Activated naive CD4-positive, alpha-beta T cell treated with anti-CD3 and anti-CD28 coated beads for 36 hours (primary cell): ENCODE measurements at regions of chr11 and their contacts with region 1.

Region 1: DNA sequence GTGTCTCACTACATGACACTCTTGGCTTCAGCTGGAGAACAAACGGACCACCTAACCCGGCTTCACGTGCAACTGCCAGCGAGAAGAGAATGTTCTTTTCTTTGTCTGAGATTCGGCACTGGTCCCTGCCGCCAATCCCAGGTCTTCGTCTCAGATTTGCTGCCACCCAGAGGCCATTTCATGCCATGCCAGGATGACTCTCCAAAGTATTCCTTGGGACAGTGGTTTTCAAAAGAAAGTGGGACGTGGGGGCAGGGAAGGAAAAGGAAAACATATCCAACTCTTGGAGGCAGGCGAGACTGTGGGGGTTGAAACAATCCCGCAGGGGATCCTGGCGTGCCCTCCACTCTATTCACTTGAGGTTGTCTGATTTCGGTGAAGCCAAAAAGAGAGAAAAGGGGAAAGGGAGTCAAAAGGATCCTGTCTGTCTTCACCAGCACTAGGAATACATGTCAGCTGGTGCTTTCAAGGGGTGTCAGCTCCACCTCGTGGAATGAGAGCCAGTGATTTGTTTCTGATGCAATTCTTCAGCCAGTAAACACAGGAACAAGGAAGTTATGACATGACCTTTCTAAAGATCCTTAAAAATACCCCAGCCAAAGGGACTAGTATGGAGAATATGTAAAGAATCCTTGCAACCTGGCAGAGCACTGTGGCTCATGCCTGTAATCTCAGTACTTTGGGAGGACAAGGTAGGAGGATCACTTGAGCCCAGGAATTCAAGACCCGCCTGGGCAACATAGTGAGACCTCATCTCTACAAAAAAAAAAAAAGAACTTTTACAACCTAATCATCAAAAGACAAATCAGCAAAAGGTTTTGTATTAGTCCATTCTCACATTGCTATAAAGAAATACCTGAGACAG is 41.0 kb upstream of the APLNR start:
- DNase-seq: peak; percentile 60
- H3K4me3 Mint-ChIP-seq: no peak overlapping the region
- H3K27ac Mint-ChIP-seq: no peak overlapping the region
- H3K4me1 Mint-ChIP-seq: peaks cover 5% of the 10 kb centered on the region
- H3K27me3 Mint-ChIP-seq: peaks cover 23% of the 10 kb centered on the region

Region 2: GRCh38 chr11:57116654-57117053 is 161.4 kb before region 1 on chr11:
- CTCF ChIA-PET with region 1: no interaction called
- intact Hi-C with region 1: loop called (anchors 1 kb)
- DNase-seq: peak; percentile 42
- H3K4me3 Mint-ChIP-seq: no peak overlapping the region
- H3K27ac Mint-ChIP-seq: no peak overlapping the region
- H3K4me1 Mint-ChIP-seq: no peaks in the 10 kb centered on the region
- H3K27me3 Mint-ChIP-seq: peaks cover 3% of the 10 kb centered on the region